ENCODE measurements at regions of chr6 and their contacts with region 1.

Region 1: GRCh38 chr6:34196126-34196830 is 40.4 kb upstream of the HMGA1 start:
- DNase-seq: peak in 1 of 2 experiments; percentile 91
- H3K4me3 ChIP-seq: peak overlapping the region in 2 of 4 experiments; percentile 23 to 34; a peak in 4 of 8 replicates
- H3K27ac ChIP-seq: no peak overlapping the region
- H3K4me1 ChIP-seq: peaks cover 0 to 12% (median 5%) of the 10 kb centered on the region in 4 experiments; a peak in 5 of 7 replicates
- H3K27me3 ChIP-seq: peaks cover 0 to 13% (median 4%) of the 10 kb centered on the region in 4 experiments; a peak in 4 of 7 replicates
- CTCF ChIP-seq: peak; percentile 78 to 85 (median 79)
- EP300 ChIP-seq: peak in 1 of 2 experiments; percentile 28; a peak in 1 of 3 replicates
- POLR2A ChIP-seq: no peak
- RAD21 ChIP-seq: peak; percentile 74 to 76

Region 2: DNA sequence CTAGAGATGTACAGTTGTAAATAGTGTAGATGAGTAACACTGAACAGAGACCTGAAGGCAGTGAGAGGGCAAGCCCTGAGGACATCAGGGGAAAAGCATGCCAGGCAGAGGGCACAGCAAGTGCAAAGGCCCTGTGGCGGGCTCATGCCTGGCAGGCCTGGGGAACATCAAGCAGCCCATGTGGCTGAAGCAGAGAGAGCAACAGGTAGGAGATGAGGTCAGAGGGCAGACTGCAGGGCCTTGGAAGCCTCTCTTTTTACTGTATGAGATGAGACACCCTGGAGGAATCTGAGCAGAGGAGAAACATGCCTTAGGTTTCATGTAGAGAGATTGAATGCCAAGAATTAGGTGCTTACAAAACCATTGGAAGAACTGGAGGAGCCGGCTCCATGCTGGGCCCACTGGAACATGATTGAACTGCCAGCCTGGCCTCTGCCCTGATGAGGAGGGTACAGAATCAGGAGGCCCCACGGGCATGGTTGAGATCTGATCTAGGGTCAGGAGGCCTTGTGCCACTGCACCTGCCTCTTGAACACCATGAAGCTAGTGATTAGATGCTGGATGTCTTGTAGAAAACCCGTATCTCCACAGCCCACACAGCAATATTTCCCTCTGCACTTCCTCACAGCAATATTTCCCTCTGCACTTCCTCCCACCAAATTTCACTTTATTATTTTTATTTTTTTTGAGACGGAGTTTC is 34.5 kb after region 1 on chr6:
- CTCF ChIA-PET with region 1: interaction called, 29 read pairs
- POLR2A ChIA-PET with region 1: interaction called, 79 read pairs
- DNase-seq: no peak
- H3K4me3 ChIP-seq: no peak overlapping the region
- H3K27ac ChIP-seq: no peak overlapping the region
- H3K4me1 ChIP-seq: peaks cover 10 to 32% (median 29%) of the 10 kb centered on the region in 4 experiments
- H3K27me3 ChIP-seq: no peaks in the 10 kb centered on the region
- CTCF ChIP-seq: no peak
- EP300 ChIP-seq: no peak
- POLR2A ChIP-seq: no peak
- RAD21 ChIP-seq: no peak

Measured in H1 (cell line).